Gastrocnemius medialis (tissue), 4 donors: ENCODE measurements at regions of chr3 and their contacts with region 1.

Region 1: GRCh38 chr3:14548321-14548729 is 8.2 kb upstream of the GRIP2 start:
- DNase-seq: peak; percentile 49 to 76
- ATAC-seq: peak; percentile 86 to 94
- H3K4me3 ChIP-seq: no peak overlapping the region
- H3K27ac ChIP-seq: peak overlapping the region; percentile 15 to 57 (median 24)
- H3K4me1 ChIP-seq: peaks cover 11% of the 10 kb centered on the region in 2 donors
- H3K27me3 ChIP-seq: no peaks in the 10 kb centered on the region
- CTCF ChIP-seq: peak; percentile 74 to 92 (median 90)
- POLR2A ChIP-seq: no peak

Region 2: DNA sequence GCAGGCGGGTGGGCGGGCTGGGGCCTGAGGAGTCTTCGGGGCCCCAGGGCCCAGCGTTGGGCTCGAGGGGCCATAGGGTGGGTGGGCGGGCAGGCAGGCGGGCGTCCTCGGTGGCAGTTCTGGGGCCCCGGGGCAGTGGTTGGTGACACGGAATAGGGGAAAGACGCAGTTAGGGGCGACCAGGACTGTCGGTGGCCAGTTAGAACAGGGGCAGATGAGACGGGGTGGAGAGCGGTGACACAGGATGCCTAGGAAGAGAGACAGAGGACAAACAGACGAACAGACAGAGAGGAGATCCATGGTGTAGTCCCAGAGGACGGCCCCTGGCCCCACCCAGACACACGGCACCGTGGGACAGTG is 44.6 kb before region 1 on chr3:
- in situ Hi-C with region 1: loop called in 2 of 4 experiments (anchors 5 kb)
- intact Hi-C with region 1: no loop called
- DNase-seq: peak in 1 of 2 donors; percentile 8
- ATAC-seq: no peak
- H3K4me3 ChIP-seq: no peak overlapping the region
- H3K27ac ChIP-seq: no peak overlapping the region
- H3K4me1 ChIP-seq: no peaks in the 10 kb centered on the region
- H3K27me3 ChIP-seq: no peaks in the 10 kb centered on the region
- CTCF ChIP-seq: no peak
- POLR2A ChIP-seq: no peak

Region 3: DNA sequence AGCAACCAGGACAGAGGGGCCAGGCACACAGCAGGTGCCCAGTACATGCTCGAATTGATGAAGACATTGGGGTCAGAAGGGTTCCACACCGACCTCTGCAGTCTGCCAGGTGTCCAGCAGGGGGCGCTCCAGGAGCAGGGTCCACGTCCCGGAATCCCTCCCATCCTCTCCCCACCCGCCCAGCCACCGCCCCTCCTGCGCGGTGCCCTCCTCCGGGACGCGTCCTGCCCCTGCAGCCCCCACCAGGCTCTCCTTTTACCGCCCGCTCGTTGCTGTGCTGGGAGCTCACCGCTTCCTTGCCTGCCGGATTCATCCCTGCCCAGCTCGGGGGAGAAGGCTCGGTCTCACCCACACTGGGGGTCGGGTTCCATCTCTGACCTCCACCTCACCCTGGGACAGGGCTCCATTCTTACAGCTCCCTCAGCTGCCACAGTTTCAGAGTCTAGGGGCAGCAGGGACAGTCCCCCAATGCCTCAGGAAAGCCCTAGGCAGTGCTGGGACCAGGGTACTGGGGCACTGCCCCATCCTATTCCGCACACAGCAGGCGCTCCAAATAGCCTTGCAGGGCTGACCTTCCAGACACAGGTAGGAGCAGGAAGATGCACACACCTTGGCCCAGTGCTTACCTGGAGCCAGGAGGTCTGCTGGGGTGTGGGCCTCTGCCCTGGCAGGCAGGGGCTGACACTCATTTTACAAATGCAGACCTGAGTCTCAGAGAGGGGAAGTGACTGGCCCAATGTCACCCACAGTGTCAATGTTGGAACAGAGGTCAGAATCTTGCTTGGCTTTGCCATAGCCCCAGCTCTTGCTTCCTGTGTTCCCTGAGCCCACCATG is 39.1 kb before region 1 on chr3:
- in situ Hi-C with region 1: loop called (anchors 5 kb)
- intact Hi-C with region 1: loop called (anchors 1 kb)
- DNase-seq: peak in 1 of 2 donors; percentile 55
- ATAC-seq: peak; percentile 52 to 75
- H3K4me3 ChIP-seq: no peak overlapping the region
- H3K27ac ChIP-seq: peak overlapping the region; percentile 11 to 59 (median 40)
- H3K4me1 ChIP-seq: peaks cover 0 to 4% of the 10 kb centered on the region in 2 donors
- H3K27me3 ChIP-seq: no peaks in the 10 kb centered on the region
- CTCF ChIP-seq: peak; percentile 90 to 98 (median 96)
- POLR2A ChIP-seq: no peak

Region 4: GRCh38 chr3:14890476-14890875 is 342.2 kb after region 1 on chr3:
- in situ Hi-C with region 1: no loop called
- intact Hi-C with region 1: no loop called
- DNase-seq: no peak
- ATAC-seq: no peak
- H3K4me3 ChIP-seq: no peak overlapping the region
- H3K27ac ChIP-seq: no peak overlapping the region
- H3K4me1 ChIP-seq: peaks cover 16 to 19% of the 10 kb centered on the region in 2 donors
- H3K27me3 ChIP-seq: no peaks in the 10 kb centered on the region
- CTCF ChIP-seq: no peak
- POLR2A ChIP-seq: no peak